Right ventricle myocardium inferior (tissue), 1 donor: ENCODE measurements at regions of chr3 and their contacts with region 1.

Region 1: DNA sequence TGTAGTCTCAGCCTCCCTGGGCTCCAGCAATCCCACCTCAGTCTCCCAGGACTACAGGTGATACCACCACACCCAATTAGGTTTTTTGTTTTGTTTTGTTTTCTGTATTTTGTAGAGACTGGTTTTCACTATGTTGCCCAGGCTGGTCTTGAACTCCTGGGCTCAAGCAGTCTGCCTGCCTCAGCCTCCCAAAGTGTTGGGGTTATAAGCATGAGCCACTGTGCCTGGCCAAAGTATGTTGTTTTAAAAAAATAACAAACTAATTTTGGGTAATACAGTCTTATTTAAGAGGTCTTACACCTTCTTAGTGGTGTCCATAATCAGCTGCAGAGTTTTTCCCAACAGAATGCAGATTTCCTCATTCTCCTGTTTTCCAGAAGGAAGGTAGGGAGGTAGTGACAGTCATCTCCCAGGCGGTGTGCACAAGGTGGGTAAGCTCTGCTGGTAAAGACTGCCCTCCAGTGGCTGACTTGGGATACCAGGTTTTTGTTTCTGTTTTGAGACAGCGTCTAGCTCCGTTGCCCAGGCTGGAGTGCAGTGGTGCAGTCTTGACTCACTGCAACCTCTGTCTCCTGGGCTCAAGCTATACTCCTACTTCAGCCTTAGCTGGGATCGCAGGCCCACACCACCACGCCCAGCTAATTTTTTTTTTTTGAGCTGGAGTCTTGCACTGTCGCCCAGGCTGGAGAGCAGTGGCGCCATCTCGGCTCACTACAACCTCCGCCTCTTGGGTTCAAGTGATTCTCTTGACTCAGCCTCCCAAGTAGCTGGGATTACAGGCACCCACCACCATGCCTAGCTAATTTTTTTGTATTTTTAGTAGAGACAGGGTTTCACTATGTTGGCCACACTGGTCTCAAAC is 58.4 kb downstream of the MAP6D1 start:
- DNase-seq: no peak
- ATAC-seq: peak; percentile 93

Region 2: GRCh38 chr3:183468424-183468823 is 298.6 kb before region 1 on chr3:
- intact Hi-C with region 1: loop called (anchors 1 kb)
- DNase-seq: no peak
- ATAC-seq: no peak

Region 3: DNA sequence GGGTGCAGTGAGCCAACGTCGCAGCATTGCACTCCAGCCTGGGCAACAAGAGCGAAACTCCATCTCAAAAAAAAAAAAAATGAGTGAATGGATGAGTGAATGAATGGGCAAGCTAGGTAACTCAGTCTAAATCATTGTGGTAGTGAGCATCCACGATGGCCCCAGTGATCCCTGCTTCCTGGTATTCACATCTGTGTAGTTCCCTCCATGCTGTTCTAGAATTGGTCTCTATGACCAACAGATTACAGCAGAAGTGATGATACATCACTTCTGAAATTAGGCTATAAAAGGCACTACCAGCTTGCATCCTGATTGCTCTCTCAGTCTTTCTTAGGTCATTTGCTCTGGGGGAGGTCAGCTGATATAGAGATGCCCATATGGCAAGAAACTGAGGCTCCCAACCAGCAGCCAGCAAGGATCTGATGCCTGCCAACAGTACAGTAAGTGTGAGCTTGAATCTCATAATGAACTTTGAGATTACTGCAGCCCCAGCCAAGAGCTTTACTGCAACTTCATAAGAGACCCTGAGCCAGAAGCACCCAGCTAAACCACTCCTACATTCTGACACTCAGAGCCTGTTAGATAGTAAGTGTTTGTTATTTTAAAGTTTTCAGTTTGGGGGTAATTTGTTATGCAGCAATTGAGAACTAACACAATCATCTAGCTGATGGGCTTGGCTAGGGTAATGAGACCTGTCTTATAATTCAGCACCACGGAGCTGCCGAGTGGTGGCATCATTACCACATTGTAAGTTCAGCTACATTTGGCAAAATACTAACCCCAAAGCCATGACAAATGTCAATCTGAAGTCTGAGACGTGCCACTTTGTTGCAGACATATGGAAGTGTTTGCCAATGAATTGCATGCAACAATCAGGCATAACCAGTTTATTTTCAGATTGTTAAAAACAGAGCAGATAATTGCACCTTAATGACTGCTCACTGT is 264.5 kb before region 1 on chr3:
- intact Hi-C with region 1: loop called (anchors 1 kb)
- DNase-seq: no peak
- ATAC-seq: peak; percentile 74

Region 4: GRCh38 chr3:183635431-183636220 is 131.3 kb before region 1 on chr3 and contains the start of gene KLHL24:
- intact Hi-C with region 1: loop called (anchors 10 kb)
- DNase-seq: peak; percentile 96
- ATAC-seq: peak; percentile 91
- total RNA-seq, gene KLHL24: 228 TPM

Region 5: GRCh38 chr3:183754052-183754451 is 12.9 kb before region 1 on chr3:
- intact Hi-C with region 1: no loop called
- DNase-seq: no peak
- ATAC-seq: no peak